ENCODE measurements at regions of chr2 and their contacts with region 1.

Region 1: GRCh38 chr2:179129574-179130238 is 79.8 kb upstream of the CCDC141 start:
- DNase-seq: no peak
- ATAC-seq: peak in 1 of 4 donors; percentile 36
- H3K4me3 ChIP-seq: no peak overlapping the region
- H3K27ac ChIP-seq: no peak overlapping the region
- H3K4me1 ChIP-seq: peaks cover 0 to 3% (median 0%) of the 10 kb centered on the region in 12 donors
- H3K27me3 ChIP-seq: no peaks in the 10 kb centered on the region
- CTCF ChIP-seq: peak; percentile 47 to 74 (median 62)
- POLR2A ChIP-seq: no peak

Region 2: DNA sequence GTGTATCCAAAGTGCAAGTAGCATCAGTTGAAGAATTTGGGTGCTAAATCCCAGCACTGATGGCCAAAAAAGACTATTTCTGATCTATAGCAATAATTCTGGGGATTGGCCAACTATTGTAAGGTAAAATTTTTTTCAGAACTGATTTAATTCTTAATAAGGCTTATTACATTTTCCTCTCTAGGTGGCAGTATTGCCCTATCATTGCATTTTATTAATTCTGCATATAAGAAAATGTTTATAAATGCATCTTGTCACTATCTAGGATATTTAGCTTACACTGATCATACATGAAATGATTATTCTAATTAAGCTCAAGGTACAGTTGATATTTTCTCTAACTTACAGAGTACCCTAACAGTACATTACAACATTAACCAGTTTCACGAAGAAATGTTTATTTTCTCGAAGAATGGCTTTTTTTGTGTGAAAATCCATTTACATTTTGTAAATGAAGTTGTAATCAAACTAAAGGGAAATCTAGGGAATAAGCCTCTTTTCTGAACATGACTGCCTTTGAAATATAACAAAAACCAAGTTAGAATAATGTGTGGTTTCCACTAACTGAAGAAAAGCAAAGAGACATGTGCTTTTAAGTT is 333.5 kb before region 1 on chr2:
- intact Hi-C with region 1: loop called in 1 of 10 experiments (anchors 10 kb)
- DNase-seq: no peak
- ATAC-seq: no peak
- H3K4me3 ChIP-seq: peak overlapping the region in 1 of 12 donors; percentile 10
- H3K27ac ChIP-seq: no peak overlapping the region
- H3K4me1 ChIP-seq: peaks cover 0 to 50% (median 2%) of the 10 kb centered on the region in 12 donors
- H3K27me3 ChIP-seq: no peaks in the 10 kb centered on the region
- CTCF ChIP-seq: peak; percentile 47 to 80 (median 65)
- POLR2A ChIP-seq: no peak

Region 3: DNA sequence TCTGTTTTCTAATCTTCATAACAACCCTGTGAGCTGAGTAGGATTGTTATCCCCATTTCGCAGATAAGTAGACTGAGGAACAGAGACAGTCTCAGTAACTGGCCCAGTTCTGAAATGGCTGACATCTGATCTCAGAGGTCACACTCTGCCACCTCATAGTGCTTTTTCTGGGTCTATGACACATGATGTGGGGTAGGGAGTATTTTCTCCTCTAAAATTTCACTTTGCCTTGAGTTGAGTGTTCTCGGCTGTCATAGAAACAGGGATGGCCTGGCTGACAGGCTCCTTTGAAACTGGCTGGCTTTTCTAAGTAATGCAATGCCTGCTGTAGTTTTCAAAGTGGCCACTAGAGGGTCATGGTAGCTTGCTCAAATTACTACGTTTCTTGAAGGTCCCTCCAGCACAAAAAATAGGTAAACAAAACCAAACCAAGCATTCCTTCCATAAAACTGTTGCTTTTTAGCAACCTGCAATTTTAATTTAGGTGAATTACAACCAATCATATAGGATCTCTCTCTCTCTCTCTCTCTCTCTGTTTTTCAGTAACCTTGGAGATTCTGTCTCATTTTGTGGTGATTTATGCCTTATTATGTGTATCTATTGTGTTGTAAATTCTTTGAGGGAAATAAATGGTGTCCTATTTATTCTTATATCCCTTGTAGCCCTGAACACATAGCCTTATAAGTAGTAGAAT is 238.3 kb before region 1 on chr2:
- intact Hi-C with region 1: loop called in 1 of 10 experiments (anchors 5 kb)
- DNase-seq: peak in 4 of 5 donors; percentile 46 to 63 (median 49)
- ATAC-seq: peak; percentile 51 to 67 (median 60)
- H3K4me3 ChIP-seq: no peak overlapping the region
- H3K27ac ChIP-seq: peak overlapping the region in 10 of 12 donors; percentile 8 to 65 (median 28)
- H3K4me1 ChIP-seq: peaks cover 0 to 41% (median 13%) of the 10 kb centered on the region in 12 donors
- H3K27me3 ChIP-seq: no peaks in the 10 kb centered on the region
- CTCF ChIP-seq: peak; percentile 86 to 96 (median 94)
- POLR2A ChIP-seq: no peak

Region 4: GRCh38 chr2:178914259-178914849 is 215.4 kb before region 1 on chr2:
- intact Hi-C with region 1: loop called in 1 of 10 experiments (anchors 10 kb)
- DNase-seq: peak; percentile 77 to 88 (median 80)
- ATAC-seq: peak; percentile 41 to 89 (median 86)
- H3K4me3 ChIP-seq: no peak overlapping the region
- H3K27ac ChIP-seq: no peak overlapping the region
- H3K4me1 ChIP-seq: peaks cover 0 to 29% (median 5%) of the 10 kb centered on the region in 12 donors
- H3K27me3 ChIP-seq: no peaks in the 10 kb centered on the region
- CTCF ChIP-seq: peak; percentile 78 to 94 (median 87)
- POLR2A ChIP-seq: no peak

Region 5: DNA sequence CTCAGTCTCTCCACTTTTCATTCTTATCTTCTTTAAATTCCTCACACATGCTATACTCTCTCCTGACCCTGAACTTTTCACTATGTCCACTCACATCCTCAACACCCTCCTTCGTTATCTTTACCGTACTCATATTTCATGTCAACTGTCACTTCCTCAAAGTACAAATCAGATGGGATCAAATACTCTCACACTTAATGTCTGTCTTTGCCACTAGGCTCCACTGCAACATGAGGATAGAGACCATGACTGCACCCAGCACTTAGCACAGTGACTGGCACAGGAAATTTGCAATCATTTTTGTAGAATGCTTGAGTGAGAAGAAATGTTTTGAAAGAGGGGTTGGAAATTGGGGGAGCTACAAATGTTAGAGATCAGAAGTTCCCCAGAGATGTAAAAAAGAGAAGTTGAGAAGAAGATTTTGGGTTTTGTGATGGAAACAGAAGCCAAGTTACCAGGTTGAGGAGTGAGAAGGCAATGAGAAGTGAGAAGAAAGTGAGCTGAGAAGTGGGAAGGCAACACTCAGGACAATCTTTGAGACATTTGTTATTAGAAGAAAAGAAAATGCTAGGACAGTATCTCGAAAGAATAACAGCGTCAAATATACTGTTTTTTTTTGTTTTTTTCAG is 166.8 kb before region 1 on chr2:
- intact Hi-C with region 1: loop called in 3 of 10 experiments (anchors 10 kb)
- DNase-seq: no peak
- ATAC-seq: peak in 3 of 4 donors; percentile 39 to 83 (median 55)
- H3K4me3 ChIP-seq: no peak overlapping the region
- H3K27ac ChIP-seq: no peak overlapping the region
- H3K4me1 ChIP-seq: peaks cover 0 to 22% (median 1%) of the 10 kb centered on the region in 12 donors
- H3K27me3 ChIP-seq: no peaks in the 10 kb centered on the region
- CTCF ChIP-seq: no peak
- POLR2A ChIP-seq: no peak

Region 6: GRCh38 chr2:178976351-178976750 is 153.4 kb before region 1 on chr2:
- intact Hi-C with region 1: loop called in 1 of 10 experiments (anchors 10 kb)
- DNase-seq: no peak
- ATAC-seq: no peak
- H3K4me3 ChIP-seq: no peak overlapping the region
- H3K27ac ChIP-seq: no peak overlapping the region
- H3K4me1 ChIP-seq: no peaks in the 10 kb centered on the region
- H3K27me3 ChIP-seq: no peaks in the 10 kb centered on the region
- CTCF ChIP-seq: no peak
- POLR2A ChIP-seq: no peak

Region 7: DNA sequence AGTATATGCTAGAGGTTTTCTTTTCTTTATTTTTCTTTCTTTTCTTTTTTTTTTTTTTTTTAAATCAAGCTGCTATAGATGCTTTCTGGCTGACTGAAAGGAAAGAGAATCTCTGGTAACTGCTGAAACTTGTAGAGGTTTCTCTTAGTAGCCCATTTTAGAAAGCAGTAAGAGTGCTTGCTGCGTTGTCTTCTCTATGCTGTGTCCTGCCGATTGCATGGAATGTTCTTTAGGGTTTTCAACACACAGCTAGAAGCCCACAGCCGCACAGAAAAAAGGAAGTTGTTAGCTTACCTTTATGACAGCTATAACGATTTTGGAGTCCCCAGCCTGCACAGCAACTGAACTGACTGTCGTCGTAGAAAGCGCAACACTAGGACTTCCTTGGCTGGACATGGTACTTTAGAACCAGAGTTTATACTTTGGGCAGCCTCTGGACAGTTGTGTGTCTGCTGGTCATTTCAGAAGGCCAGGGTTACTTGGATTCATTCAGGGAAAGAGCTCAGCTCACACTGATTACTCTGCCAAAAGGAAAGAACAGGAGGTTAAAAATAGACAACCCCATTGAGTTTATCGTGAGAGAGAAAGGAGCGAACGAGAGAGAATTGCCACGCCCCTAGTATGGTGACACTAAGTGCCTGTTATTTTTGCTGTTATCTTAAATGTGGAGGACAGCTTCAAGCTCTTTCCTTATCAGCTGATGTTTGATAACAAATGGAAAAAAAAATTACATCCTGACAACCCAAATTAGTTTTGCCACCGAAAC is 80.0 kb before region 1 on chr2 and contains the start of gene CCDC141:
- intact Hi-C with region 1: loop called in 1 of 10 experiments (anchors 10 kb)
- DNase-seq: peak in 4 of 5 donors; percentile 57 to 68 (median 63)
- ATAC-seq: peak; percentile 93 to 95 (median 95)
- H3K4me3 ChIP-seq: peak within 1 kb of the TSS; percentile 10 to 63 (median 51)
- H3K27ac ChIP-seq: peak within 1 kb of the TSS; percentile 65 to 89 (median 72)
- H3K4me1 ChIP-seq: peaks cover 0 to 40% (median 10%) of the 10 kb centered on the region in 12 donors
- H3K27me3 ChIP-seq: no peaks in the 10 kb centered on the region
- CTCF ChIP-seq: no peak
- POLR2A ChIP-seq: peak in 1 of 2 donors; percentile 51
- total RNA-seq, gene CCDC141: 58.1 to 258 (median 144) TPM

Measured in heart left ventricle (tissue), 16 donors.